Heart right ventricle (tissue), 16 donors: ENCODE measurements at regions of chr15 and their contacts with region 1.

Region 1: DNA sequence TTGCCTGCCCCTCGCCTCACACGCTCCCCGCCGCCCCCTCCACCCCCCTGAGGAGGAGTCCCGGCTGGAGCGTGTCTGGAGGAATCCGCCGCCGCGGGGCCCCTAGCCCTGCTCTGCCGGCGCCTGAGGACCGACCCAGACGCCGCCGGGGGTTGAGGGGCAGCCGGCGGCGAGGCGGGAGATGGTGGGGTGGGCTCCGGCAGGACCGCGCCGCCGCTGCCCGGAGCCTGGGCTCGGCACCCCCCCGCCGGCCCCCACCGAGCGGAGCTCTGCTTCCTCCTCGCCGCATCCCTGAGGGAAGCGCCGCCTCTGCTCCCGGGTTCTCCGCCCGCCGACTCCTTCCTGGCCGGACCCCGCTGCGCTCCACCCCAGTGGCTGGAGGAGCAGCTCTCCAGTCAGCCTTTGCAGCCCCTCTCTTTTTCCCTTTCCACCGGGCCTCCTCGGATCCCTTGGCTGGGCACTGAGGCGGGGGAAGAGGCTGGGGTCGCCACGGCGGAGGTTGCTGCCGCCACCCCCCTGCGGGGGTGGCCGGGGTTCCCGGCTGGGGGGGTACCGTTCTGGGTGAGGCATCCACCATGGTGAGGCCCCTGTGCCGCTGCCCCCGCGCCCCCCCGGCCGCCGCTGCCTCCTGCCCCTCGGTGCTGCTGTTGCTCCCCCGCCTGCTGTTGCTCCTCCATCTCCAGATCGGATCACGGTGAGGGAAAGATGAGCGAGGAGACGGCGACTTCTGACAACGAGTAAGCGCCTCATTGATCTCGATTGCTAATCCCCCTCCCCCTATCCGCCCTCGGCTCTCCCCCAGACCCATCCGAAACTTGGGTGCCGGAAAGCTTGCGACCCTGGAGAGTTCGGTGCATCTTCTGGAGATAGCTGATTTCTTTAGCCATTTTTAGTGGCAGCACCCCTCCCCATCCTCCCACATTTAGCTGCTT is at the start of gene SPRED1:
- DNase-seq: peak; percentile 81 to 84
- ATAC-seq: peak; percentile 61 to 87 (median 76)
- H3K4me3 ChIP-seq: peak within 1 kb of the TSS; percentile 73 to 95 (median 90)
- H3K27ac ChIP-seq: peak within 1 kb of the TSS; percentile 94 to 100 (median 99)
- H3K4me1 ChIP-seq: peaks cover 0 to 45% (median 38%) of the 10 kb centered on the region in 9 donors
- H3K27me3 ChIP-seq: peaks cover 0 to 3% (median 0%) of the 10 kb centered on the region in 7 donors
- CTCF ChIP-seq: no peak
- total RNA-seq, gene SPRED1: 6.4 to 20.2 (median 7.6) TPM

Region 2: GRCh38 chr15:38002883-38003477 is 249.8 kb before region 1 on chr15:
- intact Hi-C with region 1: loop called in 5 of 10 experiments (anchors 5 to 10 kb)
- DNase-seq: peak; percentile 50 to 52
- ATAC-seq: peak; percentile 59 to 85 (median 74)
- H3K4me3 ChIP-seq: no peak overlapping the region
- H3K27ac ChIP-seq: no peak overlapping the region
- H3K4me1 ChIP-seq: peaks cover 0 to 17% (median 4%) of the 10 kb centered on the region in 9 donors
- H3K27me3 ChIP-seq: no peaks in the 10 kb centered on the region
- CTCF ChIP-seq: peak; percentile 23 to 71 (median 63)

Region 3: GRCh38 chr15:38103564-38103963 is 149.2 kb before region 1 on chr15:
- intact Hi-C with region 1: no loop called
- DNase-seq: no peak
- ATAC-seq: no peak
- H3K4me3 ChIP-seq: no peak overlapping the region
- H3K27ac ChIP-seq: no peak overlapping the region
- H3K4me1 ChIP-seq: no peaks in the 10 kb centered on the region
- H3K27me3 ChIP-seq: no peaks in the 10 kb centered on the region
- CTCF ChIP-seq: no peak

Region 4: DNA sequence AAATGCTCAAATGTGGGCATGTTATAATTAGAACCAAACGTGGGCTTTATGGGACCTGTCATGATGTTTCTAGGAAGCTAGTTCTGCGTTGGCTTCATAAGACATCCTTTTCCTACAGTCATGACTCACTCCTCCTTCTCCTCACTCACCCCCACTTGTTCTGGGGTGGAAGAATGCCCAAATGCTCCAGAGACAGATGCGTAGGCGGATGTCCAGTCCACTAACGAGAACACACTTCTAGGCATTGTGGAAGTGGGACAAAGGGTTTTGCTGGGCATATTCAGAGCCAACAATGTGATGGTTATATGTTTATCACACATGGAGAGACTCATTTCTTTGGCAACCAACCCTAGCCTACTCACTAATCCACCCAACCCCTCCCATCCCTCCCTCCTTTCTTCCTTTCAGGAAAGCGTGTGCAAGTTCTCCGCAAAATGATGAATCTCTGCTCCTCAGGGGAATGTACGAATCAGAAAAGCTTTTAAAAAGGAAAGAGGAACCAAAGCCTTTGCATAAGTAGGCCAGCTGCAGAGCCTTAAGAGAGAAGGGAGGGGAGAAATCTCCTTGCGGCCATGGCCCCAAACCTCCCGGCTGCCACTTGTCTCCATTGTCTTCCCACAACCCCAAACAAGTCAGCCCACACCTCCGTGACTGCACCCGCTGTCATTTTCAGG is 123.1 kb before region 1 on chr15:
- intact Hi-C with region 1: loop called in 3 of 10 experiments (anchors 2 to 5 kb)
- DNase-seq: peak; percentile 31 to 85
- ATAC-seq: peak; percentile 79 to 90 (median 87)
- H3K4me3 ChIP-seq: peak overlapping the region in 6 of 10 donors; percentile 25 to 38 (median 31)
- H3K27ac ChIP-seq: peak overlapping the region; percentile 36 to 90 (median 80)
- H3K4me1 ChIP-seq: peaks cover 0 to 59% (median 30%) of the 10 kb centered on the region in 9 donors
- H3K27me3 ChIP-seq: no peaks in the 10 kb centered on the region
- CTCF ChIP-seq: no peak

Region 5: GRCh38 chr15:38207621-38208020 is 45.1 kb before region 1 on chr15:
- intact Hi-C with region 1: loop called in 2 of 10 experiments (anchors 5 kb)
- DNase-seq: no peak
- ATAC-seq: no peak
- H3K4me3 ChIP-seq: no peak overlapping the region
- H3K27ac ChIP-seq: peak overlapping the region in 2 of 10 donors; percentile 46 to 65
- H3K4me1 ChIP-seq: peaks cover 0 to 43% (median 30%) of the 10 kb centered on the region in 9 donors
- H3K27me3 ChIP-seq: no peaks in the 10 kb centered on the region
- CTCF ChIP-seq: no peak

Region 6: DNA sequence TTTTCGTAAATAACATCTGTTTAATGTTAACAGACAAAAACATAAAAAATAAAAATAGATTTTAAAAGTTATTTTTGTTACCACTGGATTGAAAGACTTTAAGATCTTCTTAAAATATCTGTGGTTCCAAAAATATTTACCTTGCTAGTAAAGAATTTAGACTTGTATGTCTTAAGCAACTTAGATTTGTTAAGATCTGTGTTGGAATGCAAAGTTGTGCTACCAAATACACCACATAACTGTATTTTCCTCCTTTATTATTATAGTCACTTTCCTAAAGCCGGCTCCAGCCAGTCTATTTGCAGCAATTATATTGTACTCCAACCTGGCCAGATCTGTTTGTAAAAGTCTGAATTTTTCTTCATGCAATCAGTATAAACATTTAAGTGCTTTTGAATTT is 63.6 kb after region 1 on chr15:
- intact Hi-C with region 1: loop called in 1 of 10 experiments (anchors 10 kb)
- DNase-seq: no peak
- ATAC-seq: no peak
- H3K4me3 ChIP-seq: no peak overlapping the region
- H3K27ac ChIP-seq: no peak overlapping the region
- H3K4me1 ChIP-seq: peaks cover 0 to 18% (median 0%) of the 10 kb centered on the region in 9 donors
- H3K27me3 ChIP-seq: no peaks in the 10 kb centered on the region
- CTCF ChIP-seq: no peak

Region 7: DNA sequence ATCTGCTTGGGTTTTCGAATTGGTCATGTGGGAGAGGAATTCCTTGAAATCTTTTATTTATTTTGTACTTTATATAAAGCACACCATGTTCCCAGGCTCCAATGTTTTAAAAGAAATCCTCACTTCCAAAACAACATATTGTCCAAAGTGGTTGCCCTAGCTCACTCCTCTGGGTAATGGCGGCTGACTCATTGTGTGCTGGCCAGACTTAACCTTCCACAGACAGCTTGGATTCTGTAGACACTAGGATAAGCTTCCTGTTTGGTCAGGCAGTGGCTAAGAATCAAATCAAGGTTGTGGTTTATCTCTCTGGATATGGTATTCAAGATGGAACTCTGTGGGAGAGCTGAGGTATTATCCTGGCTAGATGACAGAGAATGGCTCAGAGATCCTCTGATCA is 145.4 kb after region 1 on chr15:
- intact Hi-C with region 1: loop called in 1 of 10 experiments (anchors 5 kb)
- DNase-seq: peak in 1 of 2 donors; percentile 23
- ATAC-seq: peak in 7 of 8 donors; percentile 70 to 96 (median 90)
- H3K4me3 ChIP-seq: no peak overlapping the region
- H3K27ac ChIP-seq: peak overlapping the region in 4 of 10 donors; percentile 2 to 50 (median 42)
- H3K4me1 ChIP-seq: peaks cover 0 to 19% (median 11%) of the 10 kb centered on the region in 9 donors
- H3K27me3 ChIP-seq: no peaks in the 10 kb centered on the region
- CTCF ChIP-seq: no peak